Tibial artery (tissue), 4 donors: ENCODE measurements at regions of chr6 and their contacts with region 1.

Region 1: DNA sequence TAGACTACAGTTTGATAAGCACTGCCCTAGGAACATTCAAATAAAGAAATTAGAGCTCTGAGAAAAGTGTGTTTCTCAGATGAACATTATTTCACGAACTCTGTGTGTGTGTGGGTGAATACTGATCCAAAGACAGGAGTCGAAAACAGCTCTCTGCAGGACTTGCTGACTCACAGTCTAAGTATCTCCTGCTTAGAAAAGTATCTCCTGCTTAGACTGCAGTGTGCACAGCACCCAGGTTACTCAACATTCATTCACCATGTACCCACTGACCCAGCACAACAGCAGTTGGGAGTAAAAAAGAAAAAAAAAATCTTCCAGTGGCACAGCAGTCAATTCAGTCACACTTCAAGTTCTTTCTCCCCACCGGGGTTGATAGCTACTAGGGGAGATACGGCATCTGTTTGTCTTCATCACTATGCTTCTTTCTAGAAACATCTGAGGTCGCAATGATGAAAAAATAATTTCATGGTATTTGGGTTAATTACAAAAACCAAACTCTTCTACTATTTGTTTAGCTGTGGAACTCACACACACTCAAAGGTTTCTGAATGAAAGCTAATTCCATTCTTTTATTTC is 48.0 kb downstream of the GCLC start:
- DNase-seq: no peak
- H3K4me3 ChIP-seq: no peak overlapping the region
- H3K27ac ChIP-seq: no peak overlapping the region
- H3K4me1 ChIP-seq: peaks cover 0 to 15% (median 5%) of the 10 kb centered on the region in 4 donors
- H3K27me3 ChIP-seq: no peaks in the 10 kb centered on the region
- CTCF ChIP-seq: no peak

Region 2: DNA sequence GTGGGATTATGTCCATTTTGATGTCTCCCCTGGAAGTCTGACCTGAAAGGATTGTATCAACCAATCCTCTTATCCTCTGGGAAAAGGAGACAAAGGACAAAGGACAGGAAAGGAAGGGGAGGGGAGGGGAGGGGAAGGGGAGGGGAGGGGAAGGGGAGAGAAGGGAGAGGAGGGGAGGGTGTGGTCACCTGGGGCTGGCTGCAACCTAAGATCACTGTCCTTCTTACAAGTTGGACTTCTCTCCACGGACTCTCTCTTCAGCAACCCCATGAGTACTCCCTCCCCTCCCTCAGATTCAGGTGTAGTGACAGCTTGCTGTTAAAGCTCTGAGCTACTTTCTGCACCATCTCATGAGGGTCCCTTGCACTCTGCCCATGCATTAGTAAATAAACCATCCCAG is 227.6 kb after region 1 on chr6:
- intact Hi-C with region 1: loop called (anchors 5 kb)
- DNase-seq: no peak
- H3K4me3 ChIP-seq: no peak overlapping the region
- H3K27ac ChIP-seq: no peak overlapping the region
- H3K4me1 ChIP-seq: peaks cover 0 to 4% (median 1%) of the 10 kb centered on the region in 4 donors
- H3K27me3 ChIP-seq: no peaks in the 10 kb centered on the region
- CTCF ChIP-seq: no peak